ENCODE measurements at regions of chr18 and their contacts with region 1.

Region 1: DNA sequence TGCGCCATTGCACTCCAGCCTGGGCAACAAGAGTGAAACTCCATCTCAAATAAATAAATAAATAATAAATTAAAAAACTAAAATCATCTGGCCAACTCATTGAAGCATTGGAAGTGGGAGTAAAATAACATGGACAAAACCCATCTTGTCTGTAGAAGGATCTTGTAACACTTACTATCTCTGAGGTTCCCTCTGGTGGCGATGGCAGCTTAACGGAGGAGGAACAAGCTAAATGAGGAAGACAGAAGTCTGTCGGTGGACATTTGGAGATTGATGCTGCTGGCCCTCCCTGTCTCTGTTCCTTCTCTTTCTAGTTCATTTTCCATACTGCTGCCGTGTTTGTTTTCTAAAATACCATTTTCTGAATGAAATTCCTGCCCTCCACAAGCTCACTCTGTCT is 43.4 kb downstream of the ZCCHC2 start:
- DNase-seq: peak in 7 of 10 donors; percentile 42 to 90 (median 65)

Region 2: GRCh38 chr18:62425465-62426195 is 140.6 kb before region 1 on chr18:
- intact Hi-C with region 1: loop called (anchors 5 kb)
- DNase-seq: peak in 8 of 10 donors; percentile 44 to 93 (median 66)

Region 3: GRCh38 chr18:63216516-63217311 is 650.5 kb after region 1 on chr18:
- intact Hi-C with region 1: no loop called
- DNase-seq: no peak